Activated naive CD4-positive, alpha-beta T cell treated with anti-CD3 and anti-CD28 coated beads for 36 hours (primary cell): ENCODE measurements at regions of chr7 and their contacts with region 1.

Region 1: GRCh38 chr7:36677769-36678437 is 46.4 kb downstream of the AOAH start:
- DNase-seq: peak; percentile 79
- H3K4me3 Mint-ChIP-seq: peak overlapping the region; percentile 31
- H3K27ac Mint-ChIP-seq: peak overlapping the region; percentile 57
- H3K4me1 Mint-ChIP-seq: peaks cover 38% of the 10 kb centered on the region
- H3K27me3 Mint-ChIP-seq: peaks cover 2% of the 10 kb centered on the region

Region 2: DNA sequence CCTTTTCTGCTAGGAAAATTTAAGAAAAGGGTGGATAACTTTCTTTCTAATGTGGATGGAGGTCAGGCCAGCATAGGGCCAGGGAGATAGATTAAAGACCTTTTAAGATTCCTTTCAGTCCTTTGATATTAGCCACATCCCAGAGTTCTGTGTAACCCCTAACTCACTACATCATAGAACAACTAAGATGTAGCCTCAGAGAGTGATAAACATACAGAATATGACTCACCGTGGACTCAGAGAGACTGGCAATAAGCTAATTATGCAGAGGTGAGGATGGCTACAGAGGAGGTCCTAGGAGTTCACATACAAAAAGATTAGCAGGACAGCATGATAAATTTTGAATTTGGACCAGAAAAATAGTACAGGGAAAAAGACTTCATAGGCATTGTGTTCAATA is 94.6 kb before region 1 on chr7:
- CTCF ChIA-PET with region 1: no interaction called
- intact Hi-C with region 1: no loop called
- DNase-seq: no peak
- H3K4me3 Mint-ChIP-seq: no peak overlapping the region
- H3K27ac Mint-ChIP-seq: no peak overlapping the region
- H3K4me1 Mint-ChIP-seq: peaks cover 8% of the 10 kb centered on the region
- H3K27me3 Mint-ChIP-seq: no peaks in the 10 kb centered on the region

Region 3: DNA sequence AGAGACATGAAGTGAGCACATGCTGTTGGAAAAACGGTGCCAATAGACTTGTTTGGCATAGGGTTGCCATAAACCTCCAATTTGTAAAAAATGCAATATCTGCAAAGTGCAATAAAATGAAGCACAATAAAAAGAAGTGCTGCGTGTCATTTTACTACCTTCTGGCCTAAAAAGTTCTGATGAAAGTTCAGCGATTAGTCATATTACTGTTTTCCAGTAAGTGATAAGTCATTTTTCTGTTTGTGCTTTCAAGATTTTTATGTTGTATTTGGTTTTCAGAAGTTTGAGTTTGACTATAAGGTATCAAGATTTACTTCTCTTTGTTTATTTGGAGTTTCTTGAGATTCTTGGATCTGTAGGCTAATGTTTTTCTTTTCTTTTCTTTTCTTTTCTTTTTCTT is 29.6 kb after region 1 on chr7:
- CTCF ChIA-PET with region 1: no interaction called
- intact Hi-C with region 1: loop called (anchors 1 kb)
- DNase-seq: no peak
- H3K4me3 Mint-ChIP-seq: no peak overlapping the region
- H3K27ac Mint-ChIP-seq: peak overlapping the region; percentile 47
- H3K4me1 Mint-ChIP-seq: peaks cover 28% of the 10 kb centered on the region
- H3K27me3 Mint-ChIP-seq: no peaks in the 10 kb centered on the region

Region 4: GRCh38 chr7:36852017-36852416 is 174.1 kb after region 1 on chr7:
- CTCF ChIA-PET with region 1: no interaction called
- intact Hi-C with region 1: loop called (anchors 5 kb)
- DNase-seq: peak; percentile 18
- H3K4me3 Mint-ChIP-seq: no peak overlapping the region
- H3K27ac Mint-ChIP-seq: peak overlapping the region; percentile 54
- H3K4me1 Mint-ChIP-seq: peaks cover 17% of the 10 kb centered on the region
- H3K27me3 Mint-ChIP-seq: no peaks in the 10 kb centered on the region

Region 5: GRCh38 chr7:37031571-37032257 is 353.8 kb after region 1 on chr7:
- CTCF ChIA-PET with region 1: no interaction called
- intact Hi-C with region 1: loop called (anchors 5 kb)
- DNase-seq: peak; percentile 79
- H3K4me3 Mint-ChIP-seq: no peak overlapping the region
- H3K27ac Mint-ChIP-seq: peak overlapping the region; percentile 50
- H3K4me1 Mint-ChIP-seq: peaks cover 60% of the 10 kb centered on the region
- H3K27me3 Mint-ChIP-seq: no peaks in the 10 kb centered on the region

Region 6: DNA sequence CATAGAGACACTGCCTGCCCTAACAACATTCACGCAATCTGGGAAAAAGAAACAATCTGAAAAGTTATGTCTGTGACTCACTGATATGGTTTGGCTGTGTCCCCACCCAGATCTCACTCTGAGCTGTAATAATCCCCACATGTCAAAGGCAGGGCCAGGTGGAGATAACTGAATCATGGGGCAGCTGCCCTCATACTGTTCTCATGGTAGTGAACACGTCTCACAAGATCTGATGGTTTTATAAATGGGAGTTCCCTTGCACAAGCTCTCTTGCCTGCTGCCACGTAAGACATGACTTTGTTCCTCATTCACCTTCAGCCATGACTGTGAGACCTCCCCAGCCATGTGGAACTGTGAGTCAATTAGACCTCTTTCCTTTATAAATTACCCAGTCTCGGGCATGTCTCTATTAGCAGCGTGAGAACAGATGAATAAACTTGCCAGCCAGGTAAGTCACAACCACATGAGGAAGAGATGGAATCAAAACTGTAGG is 387.9 kb after region 1 on chr7:
- CTCF ChIA-PET with region 1: no interaction called
- intact Hi-C with region 1: loop called (anchors 5 kb)
- DNase-seq: peak; percentile 47
- H3K4me3 Mint-ChIP-seq: no peak overlapping the region
- H3K27ac Mint-ChIP-seq: peak overlapping the region; percentile 48
- H3K4me1 Mint-ChIP-seq: peaks cover 50% of the 10 kb centered on the region
- H3K27me3 Mint-ChIP-seq: no peaks in the 10 kb centered on the region